Left colon (tissue), 2 donors: ENCODE measurements at regions of chr16 and their contacts with region 1.

Region 1: DNA sequence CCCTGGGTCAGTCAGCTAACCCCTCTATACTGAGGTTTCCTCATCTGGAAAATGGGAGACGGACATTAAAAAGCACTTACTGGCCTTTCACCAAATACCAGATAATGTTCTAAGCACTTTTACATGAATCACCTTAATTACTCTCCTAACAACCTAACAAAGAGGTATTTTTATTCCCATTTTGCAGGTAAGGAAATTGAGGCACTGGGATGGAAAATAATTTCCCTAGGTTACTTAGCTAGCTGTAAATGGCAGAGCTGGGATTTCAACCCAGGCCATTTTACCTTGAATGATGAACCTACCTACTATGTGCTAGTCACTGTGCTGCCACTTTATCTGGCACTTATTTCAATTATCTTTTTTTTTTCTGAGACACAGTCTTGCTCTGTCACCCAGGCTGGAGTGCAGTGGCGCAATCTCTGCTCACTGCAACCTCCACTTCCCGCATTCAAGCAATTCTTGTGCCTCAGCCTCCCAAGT is 3.7 kb downstream of the KIF22 start:
- DNase-seq: no peak
- ATAC-seq: no peak

Region 2: GRCh38 chr16:29821643-29822115 is 27.4 kb after region 1 on chr16:
- intact Hi-C with region 1: loop called in 1 of 2 experiments (anchors 2 kb)
- DNase-seq: peak; percentile 49 to 80
- ATAC-seq: peak; percentile 39

Region 3: DNA sequence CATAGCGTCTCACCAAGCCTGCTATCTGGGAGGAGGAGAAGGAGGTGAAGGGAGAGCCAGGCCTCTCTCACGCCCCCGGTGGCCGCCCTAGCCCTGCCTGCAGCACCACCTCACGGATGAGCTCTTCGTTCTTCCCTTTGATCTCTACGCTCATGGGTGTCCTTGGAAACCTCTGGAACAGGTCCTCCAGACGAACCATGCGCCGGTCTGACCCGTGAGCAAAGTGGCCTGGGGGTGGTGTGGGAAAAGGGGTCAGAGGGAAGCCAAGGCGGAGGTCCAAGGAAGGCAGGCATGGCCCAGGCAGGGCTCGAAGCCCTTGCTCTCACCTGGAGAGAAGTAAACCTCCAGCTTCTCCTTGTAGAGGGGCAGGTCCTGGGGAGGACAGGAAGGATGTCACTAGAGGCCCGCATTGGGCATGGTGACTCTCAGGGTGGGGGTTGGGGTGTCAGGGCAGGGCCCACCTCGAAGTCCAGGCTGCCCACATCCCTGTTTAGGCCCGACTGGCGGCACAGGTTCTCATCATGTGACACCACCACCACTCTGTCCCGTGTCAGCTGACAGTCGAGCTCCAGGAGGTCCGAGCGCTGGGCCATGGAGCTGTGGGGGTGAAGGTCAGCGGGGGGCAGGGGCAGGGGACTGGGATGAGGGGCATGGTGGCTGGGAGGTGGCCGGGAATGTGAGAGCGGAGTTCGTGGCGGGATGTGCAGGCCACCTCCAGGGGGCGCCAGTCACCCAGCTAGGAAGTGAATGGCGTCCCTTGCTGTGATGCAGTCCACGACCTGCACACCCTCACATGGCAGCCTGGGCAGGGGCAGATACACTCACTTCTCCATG is 318.1 kb after region 1 on chr16:
- intact Hi-C with region 1: no loop called
- DNase-seq: peak; percentile 72 to 83
- ATAC-seq: peak; percentile 44